Adrenal gland (tissue), 19 donors: ENCODE measurements at regions of chr5 and their contacts with region 1.

Region 1: DNA sequence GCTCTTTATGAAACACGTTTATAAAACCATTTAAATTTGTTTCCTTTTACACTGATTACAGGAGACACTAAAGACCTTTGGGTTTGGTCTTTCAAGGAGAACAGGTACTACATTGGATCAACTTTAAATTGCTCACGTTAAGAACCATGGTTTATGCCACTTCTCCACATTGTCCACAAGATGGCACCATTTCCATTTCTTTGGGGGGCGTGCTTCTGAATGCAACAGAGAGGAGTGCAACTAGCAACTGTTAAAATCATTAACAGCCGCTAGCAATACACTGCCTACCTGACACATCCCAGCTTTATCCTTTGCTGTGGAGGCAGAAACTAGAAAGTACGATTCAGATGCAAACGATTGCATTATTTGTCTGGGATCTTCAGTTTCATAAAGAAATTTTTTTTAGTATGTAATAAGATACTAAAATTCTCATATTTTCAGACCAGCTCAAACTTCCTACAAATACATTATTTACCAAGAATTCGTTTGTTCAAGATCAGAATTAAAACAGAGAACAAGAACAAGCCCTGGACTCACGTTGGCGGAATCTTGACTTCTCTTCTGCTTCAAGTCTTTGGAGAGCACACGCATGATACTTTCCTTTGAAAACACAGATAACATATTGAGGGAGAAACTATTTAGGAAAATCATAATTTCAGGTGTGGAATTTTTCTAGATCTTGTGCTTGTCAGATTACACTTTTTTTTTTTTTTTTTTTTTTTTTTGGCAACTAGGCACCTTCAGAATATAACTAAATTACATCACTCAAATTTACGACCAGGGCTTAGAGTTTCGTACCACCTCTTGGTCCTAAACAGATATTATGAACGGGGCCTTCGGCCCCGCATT is 702 bp downstream of the CDC20B start:
- DNase-seq: peak; percentile 37 to 68 (median 48)
- H3K4me3 ChIP-seq: peak overlapping the region in 1 of 4 donors; percentile 62
- H3K27ac ChIP-seq: no peak overlapping the region
- H3K4me1 ChIP-seq: peaks cover 13 to 26% of the 10 kb centered on the region in 2 donors
- H3K27me3 ChIP-seq: peaks cover 43% of the 10 kb centered on the region
- CTCF ChIP-seq: peak; percentile 70 to 84 (median 82)
- POLR2A ChIP-seq: no peak

Region 2: GRCh38 chr5:55226027-55226933 is 54.0 kb after region 1 on chr5:
- intact Hi-C with region 1: loop called in 1 of 2 experiments (anchors 10 kb)
- DNase-seq: peak in 3 of 7 donors; percentile 27 to 44 (median 32)
- H3K4me3 ChIP-seq: peak overlapping the region in 1 of 4 donors; percentile 48
- H3K27ac ChIP-seq: no peak overlapping the region
- H3K4me1 ChIP-seq: peaks cover 13 to 18% of the 10 kb centered on the region in 2 donors
- H3K27me3 ChIP-seq: peaks cover 100% of the 10 kb centered on the region
- CTCF ChIP-seq: peak in 5 of 6 experiments; percentile 8 to 42 (median 19)
- POLR2A ChIP-seq: no peak

Region 3: DNA sequence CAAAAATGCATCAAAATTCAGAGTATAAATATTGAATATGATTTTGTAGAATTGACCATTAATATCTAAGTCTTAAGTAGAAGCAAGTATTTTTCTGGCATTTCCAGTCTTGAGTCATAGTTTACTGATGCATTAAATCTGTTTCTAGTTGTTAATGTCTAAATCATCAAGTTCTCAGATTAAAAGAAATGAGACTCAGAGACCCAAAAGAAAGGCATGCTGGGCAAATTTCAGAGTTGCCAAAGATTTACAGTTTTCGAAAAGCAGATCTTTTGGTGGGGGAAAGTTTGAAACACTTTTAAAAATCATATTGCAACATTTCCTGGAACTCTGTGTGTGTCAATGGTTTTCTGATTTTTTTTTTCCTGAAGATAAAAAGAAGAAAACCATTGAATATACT is 1000.0 kb after region 1 on chr5:
- intact Hi-C with region 1: no loop called
- DNase-seq: no peak
- H3K4me3 ChIP-seq: no peak overlapping the region
- H3K27ac ChIP-seq: peak overlapping the region in 3 of 5 donors; percentile 12 to 72 (median 50)
- H3K4me1 ChIP-seq: peaks cover 33 to 55% of the 10 kb centered on the region in 2 donors
- H3K27me3 ChIP-seq: no peaks in the 10 kb centered on the region
- CTCF ChIP-seq: no peak
- POLR2A ChIP-seq: no peak